Lower leg skin (tissue), 4 donors: ENCODE measurements at regions of chr5 and their contacts with region 1.

Region 1: DNA sequence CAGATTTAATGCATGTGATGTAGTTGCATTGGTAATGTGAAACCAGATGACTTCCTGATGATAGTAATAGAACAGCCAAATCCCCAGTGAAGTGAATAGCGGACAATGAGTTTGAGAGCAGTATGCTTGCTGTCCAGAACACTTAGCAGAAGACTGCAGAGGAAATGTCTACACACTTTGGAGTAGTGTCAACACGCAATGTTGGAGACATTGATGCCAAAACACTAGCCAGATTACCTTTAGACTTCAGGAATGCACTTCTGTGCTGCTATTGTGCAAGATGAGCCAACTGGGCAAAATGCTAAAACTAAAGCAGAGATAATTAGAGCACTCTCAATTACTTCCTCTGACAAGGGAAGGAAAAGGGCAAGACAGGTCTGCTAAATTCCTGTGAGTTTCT is 176.7 kb downstream of the PRDM9 start:
- DNase-seq: no peak
- H3K4me3 ChIP-seq: no peak overlapping the region
- CTCF ChIP-seq: no peak
- POLR2A ChIP-seq: no peak

Region 2: GRCh38 chr5:23648656-23649055 is 35.4 kb before region 1 on chr5:
- intact Hi-C with region 1: loop called (anchors 1 kb)
- DNase-seq: no peak
- H3K4me3 ChIP-seq: no peak overlapping the region
- CTCF ChIP-seq: no peak
- POLR2A ChIP-seq: no peak

Region 3: GRCh38 chr5:23840084-23840483 is 156.0 kb after region 1 on chr5:
- intact Hi-C with region 1: no loop called
- DNase-seq: no peak
- H3K4me3 ChIP-seq: no peak overlapping the region
- CTCF ChIP-seq: no peak
- POLR2A ChIP-seq: no peak

Region 4: DNA sequence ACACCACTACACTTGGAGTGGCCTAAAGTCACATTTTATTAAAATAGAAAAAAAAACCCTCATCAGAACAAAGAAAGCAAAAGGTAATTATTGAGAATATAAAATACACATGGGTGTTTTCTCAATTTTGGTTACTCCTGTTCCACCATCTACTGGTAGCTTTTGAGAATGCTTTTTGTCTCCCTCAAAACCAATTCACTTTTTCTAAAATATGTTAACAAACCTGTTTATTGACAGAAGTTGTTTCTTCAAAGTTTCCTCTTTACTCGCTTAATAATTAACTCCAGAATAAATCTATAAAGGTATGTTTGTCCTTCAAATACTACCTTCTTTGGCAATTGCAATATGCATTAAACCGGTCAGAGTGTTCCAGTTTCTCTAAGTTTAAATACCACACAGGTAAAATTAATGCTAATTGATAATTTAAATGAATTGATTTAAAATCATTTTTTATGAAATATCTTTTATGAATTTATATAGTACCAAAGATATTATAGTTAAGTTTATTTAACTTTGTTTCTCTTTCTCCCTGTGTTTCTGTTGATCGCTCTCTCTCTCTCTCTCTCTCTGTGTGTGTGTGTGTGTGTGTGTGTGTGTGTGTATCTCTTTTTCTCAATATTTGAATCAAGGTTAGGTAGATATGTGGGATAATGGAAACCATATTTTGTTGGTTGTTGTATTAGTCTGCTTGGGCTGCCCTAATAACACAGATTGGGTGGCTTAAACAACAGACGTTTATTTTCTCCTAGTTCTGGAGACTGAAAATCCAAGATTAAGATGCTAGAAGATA is 310.7 kb after region 1 on chr5:
- intact Hi-C with region 1: no loop called
- DNase-seq: no peak
- H3K4me3 ChIP-seq: no peak overlapping the region
- CTCF ChIP-seq: no peak
- POLR2A ChIP-seq: no peak